Activated CD4-positive, alpha-beta memory T cell treated with anti-CD3 and anti-CD28 coated beads for 36 hours (primary cell): ENCODE measurements at regions of chr4 and their contacts with region 1.

Region 1: DNA sequence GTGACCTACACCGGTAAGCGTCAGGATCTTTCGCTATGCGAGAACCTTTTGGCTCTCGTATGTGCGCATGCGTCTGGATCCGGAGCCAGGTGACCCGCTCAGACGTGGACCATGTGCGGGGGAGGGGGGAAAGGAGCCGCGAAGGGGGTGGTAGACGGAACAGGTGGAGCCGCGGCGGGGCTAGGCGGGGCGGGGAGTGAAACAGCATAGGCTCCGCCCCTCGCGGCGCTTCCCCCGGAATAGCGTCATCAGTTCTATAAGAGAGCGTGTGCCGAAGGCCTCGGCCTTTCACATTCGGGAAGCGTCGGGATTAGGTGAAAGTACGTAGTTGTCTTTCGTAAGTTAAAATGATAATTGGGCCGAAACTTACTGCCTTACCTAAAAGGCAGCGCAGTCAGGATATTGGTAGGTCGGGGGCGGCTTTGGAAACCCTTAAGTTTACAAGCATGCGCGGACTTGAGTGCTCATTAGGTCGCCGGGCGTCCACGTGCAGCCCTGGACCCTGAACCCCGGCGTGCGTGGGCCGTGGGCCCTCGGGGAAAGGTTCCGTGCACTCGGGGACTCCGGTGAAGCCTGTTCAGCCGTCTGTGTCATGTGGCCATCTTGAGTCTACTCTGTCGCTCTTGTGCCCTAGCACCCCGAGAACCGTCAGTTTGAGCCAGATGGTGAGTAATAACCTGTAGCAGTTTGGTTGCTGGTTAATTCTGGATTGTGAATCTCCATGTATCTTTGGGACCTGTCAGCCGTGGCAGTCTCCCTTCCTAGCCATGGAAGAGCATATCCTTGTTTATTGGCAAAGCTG is 74.1 kb downstream of the PRSS12 start:
- DNase-seq: peak; percentile 99
- H3K4me3 Mint-ChIP-seq: peak overlapping the region; percentile 87
- H3K27ac Mint-ChIP-seq: peak overlapping the region; percentile 97
- H3K4me1 Mint-ChIP-seq: peaks cover 46% of the 10 kb centered on the region
- H3K27me3 Mint-ChIP-seq: no peaks in the 10 kb centered on the region

Region 2: GRCh38 chr4:117874216-117874615 is 404.5 kb before region 1 on chr4:
- CTCF ChIA-PET with region 1: no interaction called
- POLR2A ChIA-PET with region 1: no interaction called
- intact Hi-C with region 1: no loop called
- DNase-seq: no peak
- H3K4me3 Mint-ChIP-seq: no peak overlapping the region
- H3K27ac Mint-ChIP-seq: no peak overlapping the region
- H3K4me1 Mint-ChIP-seq: no peaks in the 10 kb centered on the region
- H3K27me3 Mint-ChIP-seq: no peaks in the 10 kb centered on the region

Region 3: DNA sequence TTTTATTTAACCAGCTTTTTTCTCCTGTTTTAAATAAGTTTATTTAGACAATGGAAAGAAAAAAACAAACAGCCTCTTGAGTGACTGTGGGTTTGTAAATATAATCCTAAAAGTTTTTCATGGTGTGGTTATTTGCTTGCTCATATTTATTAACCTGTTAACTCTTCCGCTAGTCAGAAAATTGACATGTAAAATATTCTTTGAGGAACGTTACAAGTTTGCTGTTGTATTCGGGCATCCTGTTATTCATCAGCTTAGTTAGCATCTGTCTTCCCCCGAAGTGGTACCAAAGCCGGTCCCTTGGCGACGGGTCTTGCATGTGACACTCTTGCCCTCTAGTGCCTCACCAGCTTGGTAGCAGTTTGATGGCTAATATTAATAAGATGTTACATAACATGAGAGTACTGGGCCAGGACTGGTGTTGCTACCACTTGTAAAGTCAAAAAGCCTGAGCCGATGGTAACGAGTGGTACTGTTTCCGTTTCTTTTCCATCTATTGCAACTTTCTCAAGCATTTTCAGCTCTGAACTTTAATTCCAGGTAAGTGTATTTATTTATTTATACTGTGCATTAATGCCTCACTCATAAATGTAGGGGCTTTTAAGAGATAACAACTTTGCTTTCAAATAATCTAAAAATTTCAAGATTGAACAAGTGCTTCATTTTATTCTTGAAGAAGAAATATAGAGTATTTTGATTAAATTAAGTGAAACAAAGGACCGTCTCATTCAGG is 244.5 kb before region 1 on chr4 and contains the start of gene NDST3:
- CTCF ChIA-PET with region 1: no interaction called
- POLR2A ChIA-PET with region 1: no interaction called
- intact Hi-C with region 1: no loop called
- DNase-seq: peak; percentile 13
- H3K4me3 Mint-ChIP-seq: no peak within 1 kb of the TSS
- H3K27ac Mint-ChIP-seq: no peak within 1 kb of the TSS
- H3K4me1 Mint-ChIP-seq: peaks cover 3% of the 10 kb centered on the region
- H3K27me3 Mint-ChIP-seq: peaks cover 26% of the 10 kb centered on the region
- total RNA-seq, gene NDST3: not detected

Region 4: GRCh38 chr4:118264096-118264495 is 14.6 kb before region 1 on chr4:
- CTCF ChIA-PET with region 1: no interaction called
- POLR2A ChIA-PET with region 1: no interaction called
- intact Hi-C with region 1: no loop called
- DNase-seq: no peak
- H3K4me3 Mint-ChIP-seq: no peak overlapping the region
- H3K27ac Mint-ChIP-seq: no peak overlapping the region
- H3K4me1 Mint-ChIP-seq: no peaks in the 10 kb centered on the region
- H3K27me3 Mint-ChIP-seq: no peaks in the 10 kb centered on the region

Region 5: DNA sequence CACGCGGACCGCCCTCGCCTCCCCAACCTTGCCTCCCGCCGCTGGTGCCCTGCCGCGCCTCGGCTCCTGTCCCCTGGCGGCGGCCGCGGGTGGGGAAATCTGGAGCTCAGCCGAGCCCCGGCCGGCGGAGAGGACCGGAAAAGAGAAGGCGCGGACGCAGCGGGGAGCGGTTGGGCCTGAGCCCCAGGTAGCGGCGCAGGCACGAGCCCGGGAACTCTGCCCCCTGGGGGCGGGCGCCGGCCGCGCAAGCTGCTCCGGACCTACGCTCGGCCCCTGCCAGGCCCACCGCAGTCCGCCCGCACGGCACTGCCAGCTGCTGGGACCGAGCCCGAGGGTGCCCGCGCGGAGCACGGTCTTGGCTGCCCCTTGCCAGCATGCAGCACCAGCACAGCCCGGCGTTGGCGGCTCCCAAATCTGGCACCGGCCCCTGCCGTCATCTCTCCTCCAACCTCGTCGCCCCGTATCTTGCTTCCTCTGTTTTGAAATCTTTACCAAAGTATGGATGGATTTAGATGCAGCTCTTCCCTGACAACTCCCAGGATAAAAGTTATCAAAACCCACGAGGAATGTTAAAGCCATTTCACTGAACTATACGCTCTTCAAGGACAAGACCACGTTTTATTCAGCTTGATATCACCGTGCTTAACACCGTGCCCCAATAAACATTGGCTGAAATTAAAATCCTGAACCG is 74.3 kb after region 1 on chr4 and contains the start of gene PRSS12:
- CTCF ChIA-PET with region 1: interaction called, 5 read pairs
- POLR2A ChIA-PET with region 1: no interaction called
- intact Hi-C with region 1: loop called (anchors 1 kb)
- DNase-seq: peak; percentile 73
- H3K4me3 Mint-ChIP-seq: peak within 1 kb of the TSS; percentile 63
- H3K27ac Mint-ChIP-seq: no peak within 1 kb of the TSS
- H3K4me1 Mint-ChIP-seq: peaks cover 11% of the 10 kb centered on the region
- H3K27me3 Mint-ChIP-seq: peaks cover 55% of the 10 kb centered on the region
- total RNA-seq, gene PRSS12: not detected

Region 6: GRCh38 chr4:118586357-118586790 is 307.7 kb after region 1 on chr4:
- CTCF ChIA-PET with region 1: no interaction called
- POLR2A ChIA-PET with region 1: no interaction called
- intact Hi-C with region 1: loop called (anchors 1 kb)
- DNase-seq: no peak
- H3K4me3 Mint-ChIP-seq: no peak overlapping the region
- H3K27ac Mint-ChIP-seq: no peak overlapping the region
- H3K4me1 Mint-ChIP-seq: peaks cover 4% of the 10 kb centered on the region
- H3K27me3 Mint-ChIP-seq: peaks cover 23% of the 10 kb centered on the region

Region 7: GRCh38 chr4:118684873-118685811 is 406.5 kb after region 1 on chr4 and contains the start of gene METTL14:
- CTCF ChIA-PET with region 1: interaction called, 3 read pairs
- POLR2A ChIA-PET with region 1: no interaction called
- intact Hi-C with region 1: loop called (anchors 1 kb)
- DNase-seq: peak; percentile 93
- H3K4me3 Mint-ChIP-seq: peak within 1 kb of the TSS; percentile 97
- H3K27ac Mint-ChIP-seq: peak within 1 kb of the TSS; percentile 94
- H3K4me1 Mint-ChIP-seq: peaks cover 24% of the 10 kb centered on the region
- H3K27me3 Mint-ChIP-seq: no peaks in the 10 kb centered on the region
- total RNA-seq, gene METTL14: 39.8 to 48.3 TPM

Region 8: DNA sequence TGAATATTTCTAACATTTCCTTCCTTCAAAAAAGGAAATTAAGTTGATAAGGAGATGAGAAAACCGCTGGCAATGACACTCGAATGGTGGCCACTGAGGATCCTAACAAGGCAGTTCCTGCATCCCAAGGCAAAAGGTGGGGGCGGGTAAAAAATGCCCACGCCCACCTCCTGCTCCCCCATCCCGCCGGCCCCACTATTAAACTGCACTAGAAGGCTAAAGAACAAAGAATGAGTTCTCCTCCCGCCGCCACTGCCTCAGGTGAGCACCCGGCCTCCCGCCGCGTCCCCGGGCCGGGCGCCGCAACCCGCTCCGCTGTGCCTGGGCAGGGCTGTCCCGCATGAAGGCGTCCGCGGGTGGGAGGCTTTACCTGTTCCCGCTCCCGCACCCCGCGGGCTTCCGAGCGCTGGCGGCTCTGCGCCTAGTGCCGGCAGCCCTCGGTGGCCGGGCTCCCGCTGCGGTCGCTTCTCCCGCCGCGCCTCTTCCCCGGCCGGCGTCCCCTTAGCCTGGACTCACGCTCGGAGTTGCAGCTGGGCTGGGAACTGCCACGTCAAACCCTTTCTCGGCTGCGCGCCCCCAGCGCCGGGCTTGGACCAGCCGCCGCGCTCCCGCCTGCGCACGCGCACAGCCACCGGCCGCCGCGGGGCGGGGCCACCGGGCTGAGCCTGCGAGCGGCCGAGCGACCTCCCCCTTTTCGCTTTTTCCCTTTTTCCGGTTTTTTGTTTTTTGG is 557.1 kb after region 1 on chr4 and contains the start of gene SEC24D:
- CTCF ChIA-PET with region 1: no interaction called
- POLR2A ChIA-PET with region 1: no interaction called
- intact Hi-C with region 1: loop called (anchors 5 kb)
- DNase-seq: peak; percentile 89
- H3K4me3 Mint-ChIP-seq: peak within 1 kb of the TSS; percentile 88
- H3K27ac Mint-ChIP-seq: peak within 1 kb of the TSS; percentile 91
- H3K4me1 Mint-ChIP-seq: peaks cover 23% of the 10 kb centered on the region
- H3K27me3 Mint-ChIP-seq: no peaks in the 10 kb centered on the region
- total RNA-seq, gene SEC24D: 36.2 to 41.0 TPM

Region 9: GRCh38 chr4:120066517-120067340 is 1788.1 kb after region 1 on chr4 and contains the start of gene MAD2L1:
- CTCF ChIA-PET with region 1: no interaction called
- POLR2A ChIA-PET with region 1: no interaction called
- intact Hi-C with region 1: loop called (anchors 1 kb)
- DNase-seq: peak; percentile 99
- H3K4me3 Mint-ChIP-seq: peak within 1 kb of the TSS; percentile 98
- H3K27ac Mint-ChIP-seq: peak within 1 kb of the TSS; percentile 99
- H3K4me1 Mint-ChIP-seq: peaks cover 58% of the 10 kb centered on the region
- H3K27me3 Mint-ChIP-seq: no peaks in the 10 kb centered on the region
- total RNA-seq, gene MAD2L1: 92.0 to 96.6 TPM